ENCODE measurements at regions of chr14 and their contacts with region 1.

Region 1: GRCh38 chr14:69611201-69612011 is at the start of gene SUSD6:
- DNase-seq: peak; percentile 82 to 92 (median 85)
- H3K4me3 ChIP-seq: peak within 1 kb of the TSS; percentile 81
- H3K4me3 Mint-ChIP-seq: peak within 1 kb of the TSS; percentile 86 to 99 (median 91)
- H3K27ac ChIP-seq: peak within 1 kb of the TSS; percentile 66
- H3K27ac Mint-ChIP-seq: peak within 1 kb of the TSS; percentile 95 to 100 (median 100)
- H3K4me1 ChIP-seq: peaks cover 60% of the 10 kb centered on the region
- H3K4me1 Mint-ChIP-seq: peaks cover 55 to 57% (median 56%) of the 10 kb centered on the region in 3 donors
- H3K27me3 ChIP-seq: no peaks in the 10 kb centered on the region
- H3K27me3 Mint-ChIP-seq: peaks cover 0 to 5% of the 10 kb centered on the region in 2 donors
- total RNA-seq, gene SUSD6: 51.4 to 53.9 TPM

Region 2: DNA sequence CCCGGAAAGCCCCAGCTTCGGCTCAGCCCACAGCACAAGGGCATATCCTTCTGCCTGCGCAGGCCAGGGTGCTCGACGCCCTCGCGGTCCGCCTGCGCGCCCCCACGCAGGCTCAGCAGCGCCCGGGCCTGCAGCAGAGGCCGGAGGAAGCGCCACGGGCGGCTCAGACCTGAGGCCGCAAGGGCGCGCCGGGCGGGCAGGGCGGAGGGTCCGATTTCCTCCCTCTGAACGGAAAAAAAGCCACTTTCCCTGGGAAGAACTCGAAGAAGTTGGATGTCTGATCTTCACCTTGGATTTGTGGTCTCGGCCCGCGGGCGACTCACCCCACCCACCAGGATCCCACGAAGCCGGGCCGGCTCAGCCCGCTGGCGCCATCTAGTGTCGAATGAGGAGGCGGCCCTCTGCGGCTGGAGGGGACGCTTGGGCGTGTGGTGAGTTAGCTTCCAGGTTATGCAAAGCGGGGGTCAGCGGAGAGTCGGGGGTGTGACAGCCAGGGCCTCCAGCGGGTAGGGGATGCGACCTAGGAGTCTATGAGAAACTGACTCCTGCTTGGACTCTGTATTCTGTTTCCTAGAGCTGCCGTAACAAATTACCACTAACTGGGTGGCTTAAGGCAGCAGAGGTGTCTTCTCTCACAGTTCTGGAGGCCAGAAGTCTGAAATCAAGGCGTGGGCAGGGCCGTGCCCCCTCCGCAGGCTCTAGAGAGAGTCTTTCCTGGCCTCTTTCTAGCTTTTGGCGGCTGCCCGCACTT is 115.5 kb after region 1 on chr14:
- CTCF ChIA-PET with region 1: interaction called, 41 read pairs
- POLR2A ChIA-PET with region 1: no interaction called
- DNase-seq: peak; percentile 76 to 83 (median 78)
- H3K4me3 ChIP-seq: peak overlapping the region; percentile 51
- H3K4me3 Mint-ChIP-seq: peak overlapping the region; percentile 10 to 87 (median 78)
- H3K27ac ChIP-seq: peak overlapping the region; percentile 43
- H3K27ac Mint-ChIP-seq: peak overlapping the region; percentile 51 to 97 (median 88)
- H3K4me1 ChIP-seq: peaks cover 11% of the 10 kb centered on the region
- H3K4me1 Mint-ChIP-seq: peaks cover 20 to 36% (median 28%) of the 10 kb centered on the region in 3 donors
- H3K27me3 ChIP-seq: no peaks in the 10 kb centered on the region
- H3K27me3 Mint-ChIP-seq: no peaks in the 10 kb centered on the region

Region 3: DNA sequence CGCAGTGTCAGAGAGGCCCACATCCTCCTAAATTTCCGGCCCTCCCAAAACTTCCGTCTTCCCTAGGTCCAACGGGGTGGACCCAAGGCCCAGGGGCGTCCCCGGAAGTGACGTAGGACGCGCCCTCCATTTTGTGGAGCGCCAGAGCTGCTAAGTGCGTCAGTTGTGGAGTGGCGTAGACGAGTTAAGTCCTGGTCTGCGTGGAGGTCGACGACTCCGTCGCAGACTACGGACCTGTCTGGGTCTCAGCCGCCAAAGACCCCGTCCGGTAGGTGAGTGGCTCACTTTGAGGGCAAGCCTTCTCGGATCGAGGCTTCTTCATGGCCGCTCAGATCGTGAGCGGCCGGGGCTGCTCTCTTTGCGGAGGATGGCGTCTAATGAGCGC is 155.6 kb after region 1 on chr14 and contains the start of gene SRSF5:
- CTCF ChIA-PET with region 1: no interaction called
- POLR2A ChIA-PET with region 1: interaction called, 30 read pairs
- DNase-seq: peak; percentile 91 to 97 (median 93)
- H3K4me3 ChIP-seq: peak within 1 kb of the TSS; percentile 99
- H3K4me3 Mint-ChIP-seq: peak within 1 kb of the TSS; percentile 98 to 100 (median 99)
- H3K27ac ChIP-seq: peak within 1 kb of the TSS; percentile 100
- H3K27ac Mint-ChIP-seq: peak within 1 kb of the TSS; percentile 99 to 100 (median 100)
- H3K4me1 ChIP-seq: peaks cover 45% of the 10 kb centered on the region
- H3K4me1 Mint-ChIP-seq: peaks cover 55 to 61% (median 60%) of the 10 kb centered on the region in 3 donors
- H3K27me3 ChIP-seq: no peaks in the 10 kb centered on the region
- H3K27me3 Mint-ChIP-seq: peaks cover 0 to 20% of the 10 kb centered on the region in 2 donors
- total RNA-seq, gene SRSF5: 291 to 307 TPM

Measured in CD8-positive, alpha-beta memory T cell (primary cell).